Dendritic cell treated with granulocyte-macrophage colony-stimulating factor and Interleukin-4, amounts not matched to agents 40 ng/mL and 50 ng/mL, for 4 days (primary cell): ENCODE measurements at regions of chr5 and their contacts with region 1.

Region 1: DNA sequence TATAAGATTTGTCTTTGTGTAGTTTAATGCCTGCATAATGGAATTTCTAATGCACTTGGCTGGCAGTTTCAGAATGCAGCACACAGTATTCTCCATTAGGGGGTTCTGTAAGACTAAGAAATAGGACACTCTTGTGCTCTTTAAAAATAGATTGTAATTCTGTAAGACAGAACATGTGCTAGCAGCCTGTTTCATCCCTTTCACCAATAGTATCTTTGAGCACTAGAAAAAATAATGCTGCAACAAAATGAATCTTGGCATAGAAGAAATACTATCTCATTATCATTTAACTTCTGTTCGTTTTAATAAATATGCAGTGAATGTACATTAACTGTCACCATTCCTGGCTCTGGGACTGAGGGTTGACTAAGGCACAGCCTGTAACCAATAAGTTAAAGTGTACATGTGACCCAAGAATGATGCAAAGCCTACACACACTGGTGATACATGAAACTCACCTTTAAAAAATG is 23.8 kb upstream of the ZNF622 start:
- H3K4me3 Mint-ChIP-seq: no peak overlapping the region
- H3K27ac Mint-ChIP-seq: no peak overlapping the region
- H3K4me1 Mint-ChIP-seq: no peaks in the 10 kb centered on the region
- H3K27me3 Mint-ChIP-seq: no peaks in the 10 kb centered on the region

Region 2: GRCh38 chr5:16552666-16553343 is 63.4 kb after region 1 on chr5:
- intact Hi-C with region 1: loop called (anchors 1 kb)
- H3K4me3 Mint-ChIP-seq: no peak overlapping the region
- H3K27ac Mint-ChIP-seq: no peak overlapping the region
- H3K4me1 Mint-ChIP-seq: no peaks in the 10 kb centered on the region
- H3K27me3 Mint-ChIP-seq: no peaks in the 10 kb centered on the region

Region 3: DNA sequence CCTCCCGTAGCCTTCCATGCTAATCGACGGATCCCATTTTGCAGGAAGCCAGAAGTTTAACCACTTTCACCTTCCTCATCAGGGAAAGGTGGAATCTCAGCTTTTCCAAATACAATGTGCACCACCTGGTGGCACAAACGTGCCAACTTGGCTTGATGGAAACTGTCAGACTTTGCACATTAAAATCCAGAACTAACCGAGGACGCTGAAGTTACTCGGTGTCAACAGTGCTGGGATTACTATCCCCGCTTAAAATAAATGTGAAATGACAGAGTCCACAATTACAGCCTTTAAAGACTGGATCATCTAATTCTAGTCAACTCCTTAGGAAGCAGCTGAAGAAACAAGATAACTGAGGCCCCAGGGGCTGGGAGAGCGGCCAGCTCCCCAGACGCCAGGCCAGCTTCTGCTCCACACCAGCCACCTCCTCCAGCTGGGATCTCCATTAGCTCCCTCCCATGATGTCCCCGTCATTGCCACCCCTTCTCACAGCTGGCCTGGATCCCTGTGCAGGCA is 177.6 kb after region 1 on chr5:
- intact Hi-C with region 1: loop called (anchors 10 kb)
- H3K4me3 Mint-ChIP-seq: no peak overlapping the region
- H3K27ac Mint-ChIP-seq: no peak overlapping the region
- H3K4me1 Mint-ChIP-seq: no peaks in the 10 kb centered on the region
- H3K27me3 Mint-ChIP-seq: no peaks in the 10 kb centered on the region

Region 4: GRCh38 chr5:17189381-17190036 is 700.2 kb after region 1 on chr5:
- intact Hi-C with region 1: loop called (anchors 10 kb)
- H3K4me3 Mint-ChIP-seq: no peak overlapping the region
- H3K27ac Mint-ChIP-seq: no peak overlapping the region
- H3K4me1 Mint-ChIP-seq: no peaks in the 10 kb centered on the region
- H3K27me3 Mint-ChIP-seq: peaks cover 2% of the 10 kb centered on the region

Region 5: GRCh38 chr5:17204133-17204489 is 714.8 kb after region 1 on chr5:
- intact Hi-C with region 1: loop called (anchors 5 kb)
- H3K4me3 Mint-ChIP-seq: no peak overlapping the region
- H3K27ac Mint-ChIP-seq: no peak overlapping the region
- H3K4me1 Mint-ChIP-seq: no peaks in the 10 kb centered on the region
- H3K27me3 Mint-ChIP-seq: peaks cover 10% of the 10 kb centered on the region